Left ventricle myocardium superior (tissue), 1 donor: ENCODE measurements at regions of chr14 and their contacts with region 1.

Region 1: GRCh38 chr14:24436355-24437019 is 6.1 kb downstream of the SDR39U1 start:
- DNase-seq: no peak
- ATAC-seq: peak; percentile 36

Region 2: GRCh38 chr14:24332268-24332993 is 104.1 kb before region 1 on chr14:
- intact Hi-C with region 1: loop called (anchors 2 kb)
- DNase-seq: peak; percentile 67
- ATAC-seq: peak; percentile 69